Psoas muscle (tissue), 8 donors: ENCODE measurements at regions of chr2 and their contacts with region 1.

Region 1: GRCh38 chr2:64045938-64046337 is 26.7 kb upstream of the VPS54 start:
- DNase-seq: no peak
- ATAC-seq: no peak
- H3K4me3 ChIP-seq: no peak overlapping the region
- H3K27ac ChIP-seq: no peak overlapping the region
- H3K4me1 ChIP-seq: no peaks in the 10 kb centered on the region
- H3K27me3 ChIP-seq: no peaks in the 10 kb centered on the region
- CTCF ChIP-seq: no peak

Region 2: DNA sequence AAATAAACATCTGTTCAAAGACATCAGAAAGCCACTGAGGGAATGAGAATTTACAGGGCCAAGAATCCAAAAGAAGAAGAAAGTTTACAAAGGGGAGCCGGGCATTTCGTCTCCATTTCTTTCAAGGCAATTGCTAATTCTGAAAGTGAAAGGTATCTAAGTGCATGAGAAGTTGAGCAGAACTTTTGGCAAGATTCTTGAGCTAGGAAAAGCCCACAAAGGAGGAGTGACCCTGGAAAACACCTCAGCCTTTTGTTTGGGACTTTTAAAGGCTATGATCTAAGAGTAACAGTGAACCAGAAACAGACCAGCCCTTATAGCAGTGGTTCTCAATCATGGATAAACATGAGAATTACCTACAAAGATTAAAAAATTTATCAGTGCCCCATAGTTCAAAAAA is 369.8 kb before region 1 on chr2:
- intact Hi-C with region 1: no loop called
- DNase-seq: no peak
- ATAC-seq: no peak
- H3K4me3 ChIP-seq: no peak overlapping the region
- H3K27ac ChIP-seq: no peak overlapping the region
- H3K4me1 ChIP-seq: peaks cover 5% of the 10 kb centered on the region
- H3K27me3 ChIP-seq: no peaks in the 10 kb centered on the region
- CTCF ChIP-seq: no peak

Region 3: GRCh38 chr2:64311948-64312621 is 266.1 kb after region 1 on chr2:
- intact Hi-C with region 1: loop called (anchors 5 kb)
- DNase-seq: peak; percentile 70 to 78
- ATAC-seq: peak; percentile 94 to 99 (median 96)
- H3K4me3 ChIP-seq: peak overlapping the region; percentile 29
- H3K27ac ChIP-seq: no peak overlapping the region
- H3K4me1 ChIP-seq: peaks cover 9% of the 10 kb centered on the region
- H3K27me3 ChIP-seq: no peaks in the 10 kb centered on the region
- CTCF ChIP-seq: peak; percentile 51